ENCODE measurements at regions of chr16 and their contacts with region 1.

Region 1: GRCh38 chr16:57519796-57520360 is 16.5 kb downstream of the CCDC102A start:
- DNase-seq: peak; percentile 86
- ATAC-seq: peak; percentile 96
- H3K4me3 Mint-ChIP-seq: no peak overlapping the region
- H3K27ac Mint-ChIP-seq: peak overlapping the region; percentile 8
- H3K4me1 Mint-ChIP-seq: peaks cover 11% of the 10 kb centered on the region
- H3K27me3 Mint-ChIP-seq: no peaks in the 10 kb centered on the region

Region 2: GRCh38 chr16:57300387-57301125 is 219.3 kb before region 1 on chr16:
- CTCF ChIA-PET with region 1: interaction called, 22 read pairs
- DNase-seq: peak; percentile 99
- ATAC-seq: peak; percentile 90
- H3K4me3 Mint-ChIP-seq: no peak overlapping the region
- H3K27ac Mint-ChIP-seq: no peak overlapping the region
- H3K4me1 Mint-ChIP-seq: peaks cover 24% of the 10 kb centered on the region
- H3K27me3 Mint-ChIP-seq: no peaks in the 10 kb centered on the region

Region 3: DNA sequence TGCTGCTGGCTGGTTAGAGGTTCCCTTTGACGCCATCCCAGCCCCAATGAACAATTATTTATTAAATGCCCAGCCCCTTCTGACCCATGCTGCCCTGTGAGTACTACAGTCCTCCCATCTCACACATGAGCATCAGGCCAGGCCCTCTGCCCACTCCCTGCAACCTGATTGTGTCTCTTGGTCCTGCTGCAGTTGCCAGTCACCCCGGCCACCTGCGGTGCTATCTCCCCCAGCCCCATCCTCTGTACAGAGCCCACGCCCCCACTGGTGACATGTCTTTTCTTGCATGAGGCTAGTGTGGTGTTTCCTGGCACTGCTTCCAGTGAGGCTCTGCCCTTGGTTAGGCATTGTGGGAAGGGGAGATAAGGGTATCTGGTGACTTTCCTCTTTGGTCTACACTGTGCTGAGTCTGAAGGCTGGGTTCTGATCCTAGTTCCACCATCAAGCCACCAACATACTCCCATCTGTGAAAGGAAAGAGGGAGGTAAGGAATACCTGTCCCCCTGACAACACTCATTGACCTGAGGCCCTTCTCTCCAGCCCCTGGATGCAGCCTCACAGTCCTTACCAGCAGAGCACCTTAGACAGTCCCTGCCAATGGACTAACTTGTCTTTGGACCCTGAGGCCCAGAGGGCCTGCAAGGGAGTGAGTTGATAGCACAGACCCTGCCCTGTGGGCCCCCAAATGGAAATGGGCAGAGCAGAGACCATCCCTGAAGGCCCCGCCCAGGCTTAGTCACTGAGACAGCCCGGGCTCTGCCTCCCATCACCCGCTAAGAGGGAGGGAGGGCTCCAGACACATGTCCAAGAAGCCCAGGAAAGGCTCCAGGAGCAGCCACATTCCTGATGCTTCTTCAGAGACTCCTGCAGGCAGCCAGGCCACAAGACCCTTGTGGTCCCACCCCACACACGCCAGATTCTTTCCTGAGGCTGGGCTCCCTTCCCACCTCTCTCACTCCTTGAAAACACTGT is 136.3 kb before region 1 on chr16:
- CTCF ChIA-PET with region 1: no interaction called
- DNase-seq: no peak
- ATAC-seq: no peak
- H3K4me3 Mint-ChIP-seq: no peak overlapping the region
- H3K27ac Mint-ChIP-seq: no peak overlapping the region
- H3K4me1 Mint-ChIP-seq: peaks cover 14% of the 10 kb centered on the region
- H3K27me3 Mint-ChIP-seq: no peaks in the 10 kb centered on the region

Region 4: DNA sequence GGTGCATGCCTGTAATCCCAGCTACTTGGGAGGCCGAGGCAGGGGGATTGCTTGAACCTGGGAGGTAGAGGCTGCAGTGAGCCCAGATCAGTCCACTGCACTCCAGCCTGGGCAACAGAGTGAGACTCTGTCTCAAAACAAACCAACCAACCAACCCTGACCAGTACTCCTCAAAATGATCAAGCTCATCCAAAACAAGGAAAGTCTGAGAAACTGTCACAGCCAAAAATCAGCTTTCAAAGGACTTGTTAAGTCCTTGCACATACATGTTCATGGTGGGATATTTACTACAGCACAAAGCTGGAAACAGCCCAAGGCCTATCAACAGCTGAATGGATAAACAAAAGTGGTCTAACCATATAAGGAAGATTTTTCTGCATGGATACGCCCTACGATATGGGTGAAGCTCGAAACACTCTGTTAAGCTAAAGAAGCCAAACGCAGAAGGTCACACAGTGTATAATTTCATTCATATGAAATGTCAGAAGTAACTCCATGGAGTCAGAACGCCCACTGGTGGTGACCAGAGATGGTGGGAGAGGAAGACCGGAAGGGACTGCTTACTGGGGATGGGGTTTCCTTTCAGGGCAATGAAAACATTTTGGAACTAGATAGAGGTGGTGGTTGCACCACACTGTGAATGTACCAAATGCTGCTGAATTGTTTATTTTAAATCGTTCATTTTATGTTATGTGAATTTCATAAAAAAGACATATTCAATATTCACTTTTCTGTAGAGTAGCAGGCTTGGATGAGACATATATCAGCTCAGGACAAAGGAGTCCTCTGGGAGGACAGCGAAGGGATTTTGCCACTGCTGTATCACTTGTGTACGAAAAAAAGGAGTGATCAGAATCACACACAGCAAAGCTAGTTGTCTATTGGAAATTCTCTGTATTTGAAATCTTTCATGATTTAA is 97.6 kb before region 1 on chr16:
- CTCF ChIA-PET with region 1: interaction called, 74 read pairs
- DNase-seq: no peak
- ATAC-seq: no peak
- H3K4me3 Mint-ChIP-seq: no peak overlapping the region
- H3K27ac Mint-ChIP-seq: no peak overlapping the region
- H3K4me1 Mint-ChIP-seq: peaks cover 14% of the 10 kb centered on the region
- H3K27me3 Mint-ChIP-seq: no peaks in the 10 kb centered on the region

Region 5: DNA sequence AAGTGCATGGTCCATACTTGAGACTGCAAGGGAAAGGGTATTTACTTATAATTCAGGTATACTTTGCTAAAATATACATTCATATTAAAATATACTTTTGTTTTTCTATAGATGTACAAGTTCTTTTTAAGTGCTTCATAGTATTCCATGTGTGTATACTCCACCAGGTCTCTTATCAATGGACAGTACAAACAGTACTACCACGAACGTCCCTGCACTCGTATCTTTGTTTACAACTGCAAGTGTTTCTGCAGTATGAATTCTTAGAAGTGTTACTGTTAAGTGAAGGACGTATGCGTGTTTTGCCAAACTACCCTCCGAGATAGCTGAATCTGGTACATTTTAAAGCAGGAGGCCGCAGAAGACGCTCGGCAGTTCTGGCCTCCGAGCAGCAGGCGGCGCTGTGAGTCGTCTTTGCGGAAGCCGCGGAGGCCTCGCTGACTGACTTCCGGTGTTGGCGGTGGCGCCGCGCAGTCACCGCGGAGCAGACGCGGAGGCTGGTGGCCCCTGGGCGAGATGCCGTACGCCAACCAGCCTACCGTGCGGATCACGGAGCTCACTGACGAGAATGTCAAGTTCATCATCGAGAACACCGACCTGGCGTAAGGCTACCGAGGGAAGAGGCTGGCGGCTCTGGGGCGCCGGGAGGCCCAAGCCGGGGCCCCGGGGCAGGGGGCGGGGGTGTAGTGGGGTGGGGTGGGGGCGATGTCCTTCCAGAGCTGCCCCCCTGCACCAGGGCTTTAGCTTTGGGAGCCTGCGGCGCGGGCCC is 57.5 kb before region 1 on chr16 and contains the start of gene POLR2C:
- CTCF ChIA-PET with region 1: interaction called, 40 read pairs
- DNase-seq: peak; percentile 94
- ATAC-seq: peak; percentile 96
- H3K4me3 Mint-ChIP-seq: peak within 1 kb of the TSS; percentile 94
- H3K27ac Mint-ChIP-seq: peak within 1 kb of the TSS; percentile 98
- H3K4me1 Mint-ChIP-seq: peaks cover 31% of the 10 kb centered on the region
- H3K27me3 Mint-ChIP-seq: no peaks in the 10 kb centered on the region
- total RNA-seq, gene POLR2C: 48.6 to 61.7 TPM

Region 6: GRCh38 chr16:57485916-57486857 is 33.7 kb before region 1 on chr16 and contains the start of gene DOK4:
- CTCF ChIA-PET with region 1: interaction called, 21 read pairs
- DNase-seq: peak; percentile 81
- ATAC-seq: peak; percentile 98
- H3K4me3 Mint-ChIP-seq: peak within 1 kb of the TSS; percentile 71
- H3K27ac Mint-ChIP-seq: peak within 1 kb of the TSS; percentile 49
- H3K4me1 Mint-ChIP-seq: peaks cover 22% of the 10 kb centered on the region
- H3K27me3 Mint-ChIP-seq: peaks cover 3% of the 10 kb centered on the region
- total RNA-seq, gene DOK4: 3.4 to 4.7 TPM

Region 7: DNA sequence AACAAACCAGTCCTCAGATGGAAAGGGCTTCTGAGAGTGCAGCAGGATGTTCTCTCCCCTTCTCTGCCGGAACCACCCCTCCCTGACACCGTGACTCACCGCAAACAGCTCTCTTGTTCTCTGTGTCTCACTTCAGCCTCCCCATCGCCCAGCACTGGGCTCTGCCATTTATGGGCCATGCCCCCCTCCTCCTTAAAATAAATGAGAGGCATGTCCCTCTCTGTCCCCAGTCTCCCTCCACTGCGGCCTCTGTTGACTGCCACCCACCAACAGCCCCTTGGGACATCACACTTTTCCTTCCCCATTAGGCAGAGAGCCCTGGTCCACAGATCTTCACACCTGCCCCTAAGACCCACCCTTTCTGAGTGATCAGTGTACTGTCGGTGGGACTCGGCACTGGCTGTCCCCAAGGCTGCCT is 10.2 kb after region 1 on chr16:
- CTCF ChIA-PET with region 1: interaction called, 15 read pairs
- DNase-seq: peak; percentile 93
- ATAC-seq: peak; percentile 95
- H3K4me3 Mint-ChIP-seq: peak overlapping the region; percentile 56
- H3K27ac Mint-ChIP-seq: peak overlapping the region; percentile 99
- H3K4me1 Mint-ChIP-seq: peaks cover 58% of the 10 kb centered on the region
- H3K27me3 Mint-ChIP-seq: no peaks in the 10 kb centered on the region